HCT116 (cell line): ENCODE measurements at regions of chr4 and their contacts with region 1.

Region 1: DNA sequence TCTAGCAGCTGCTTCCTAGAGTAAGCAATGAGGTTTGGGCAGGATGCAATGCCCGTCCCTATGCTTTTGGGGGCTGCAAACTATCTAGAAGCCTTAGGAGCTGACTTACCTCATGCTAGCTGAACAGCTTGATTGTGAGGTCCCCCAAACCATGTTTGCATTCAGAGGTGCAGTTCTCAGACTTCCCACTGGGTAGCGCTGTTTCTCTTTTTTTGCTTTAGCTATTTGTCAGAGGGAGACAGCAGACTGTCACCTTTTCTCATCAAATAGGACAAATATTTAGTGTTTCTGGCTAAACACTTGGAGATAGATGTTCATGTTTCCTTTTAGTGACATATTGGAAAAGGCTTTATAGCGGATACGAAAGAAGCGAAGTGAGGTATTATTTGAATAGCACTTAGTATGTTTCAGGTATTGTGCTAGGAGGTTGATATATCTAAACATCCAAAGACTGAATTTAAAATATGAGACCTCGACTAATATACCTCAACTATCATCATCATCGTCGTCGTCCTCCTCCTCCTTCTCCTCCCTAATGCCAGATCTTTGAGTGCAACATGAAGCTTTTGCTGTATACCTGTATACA is 18.7 kb upstream of the TMEM192 start:
- DNase-seq: peak; percentile 46
- ATAC-seq: peak; percentile 95
- H3K4me3 ChIP-seq: no peak overlapping the region
- H3K27ac ChIP-seq: no peak overlapping the region
- H3K4me1 ChIP-seq: no peaks in the 10 kb centered on the region
- H3K27me3 ChIP-seq: no peaks in the 10 kb centered on the region
- CTCF ChIP-seq: peak; percentile 82 to 98 (median 88)
- POLR2A ChIP-seq: no peak
- RAD21 ChIP-seq: peak; percentile 95

Region 2: DNA sequence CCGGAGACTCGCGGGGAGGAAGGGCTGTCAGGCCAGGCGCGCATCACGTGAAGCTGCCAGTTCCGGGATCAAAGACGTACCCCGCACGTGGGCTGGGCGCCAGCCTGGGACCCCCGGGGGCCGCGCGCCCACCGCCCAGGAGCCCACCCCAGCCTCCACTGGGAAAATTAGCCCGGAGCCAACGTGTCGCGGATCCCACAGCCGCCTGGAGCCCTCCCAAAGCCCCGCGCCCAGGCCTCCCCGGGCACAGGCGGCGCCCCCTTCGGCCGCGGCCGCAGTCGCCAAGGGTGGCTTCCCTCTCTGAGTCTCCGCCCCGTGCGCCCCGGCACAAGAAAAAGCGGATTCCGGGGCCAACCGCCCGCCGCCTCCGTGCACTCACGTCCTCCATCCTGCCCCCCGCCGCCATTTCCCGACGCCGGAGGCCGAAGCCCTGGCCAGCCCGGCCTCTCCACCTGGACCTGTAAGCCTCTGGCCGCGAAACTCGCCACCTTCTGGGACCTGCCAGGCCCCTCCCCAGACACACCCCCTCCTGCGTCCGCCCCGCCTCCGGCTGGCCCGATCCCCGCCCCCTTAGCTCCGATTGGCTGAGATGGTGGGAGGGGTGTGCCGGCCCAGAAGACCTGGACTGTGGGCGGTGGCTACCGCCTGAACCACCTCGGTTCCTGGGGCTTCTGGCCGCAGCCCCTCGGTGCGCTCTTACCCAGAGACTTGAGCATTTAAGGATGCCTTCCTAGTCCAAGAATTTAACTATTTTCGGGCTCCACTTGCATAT is 18.8 kb before region 1 on chr4 and contains the start of gene TMEM192:
- CTCF ChIA-PET with region 1: interaction called, 15 read pairs
- POLR2A ChIA-PET with region 1: no interaction called
- RAD21 ChIA-PET with region 1: no interaction called
- intact Hi-C with region 1: no loop called
- DNase-seq: peak; percentile 83
- ATAC-seq: peak; percentile 93
- H3K4me3 ChIP-seq: peak within 1 kb of the TSS; percentile 65 to 78
- H3K27ac ChIP-seq: peak within 1 kb of the TSS; percentile 74
- H3K4me1 ChIP-seq: peaks cover 8 to 14% of the 10 kb centered on the region in 2 experiments; a peak in 3 of 4 replicates
- H3K27me3 ChIP-seq: no peaks in the 10 kb centered on the region
- CTCF ChIP-seq: peak in 2 of 3 experiments; percentile 39 to 53; a peak in 4 of 6 replicates
- POLR2A ChIP-seq: no peak
- RAD21 ChIP-seq: no peak
- total RNA-seq, gene TMEM192: 13.1 TPM

Region 3: GRCh38 chr4:165343353-165344191 is 212.2 kb after region 1 on chr4:
- CTCF ChIA-PET with region 1: interaction called, 99 read pairs
- POLR2A ChIA-PET with region 1: no interaction called
- RAD21 ChIA-PET with region 1: interaction called, 4 to 14 read pairs
- intact Hi-C with region 1: loop called (anchors 1 kb)
- DNase-seq: no peak
- ATAC-seq: peak; percentile 78
- H3K4me3 ChIP-seq: no peak overlapping the region
- H3K27ac ChIP-seq: no peak overlapping the region
- H3K4me1 ChIP-seq: no peaks in the 10 kb centered on the region
- H3K27me3 ChIP-seq: no peaks in the 10 kb centered on the region
- CTCF ChIP-seq: peak; percentile 53 to 65 (median 59); a peak in 4 of 6 replicates
- POLR2A ChIP-seq: no peak
- RAD21 ChIP-seq: peak; percentile 86

Region 4: DNA sequence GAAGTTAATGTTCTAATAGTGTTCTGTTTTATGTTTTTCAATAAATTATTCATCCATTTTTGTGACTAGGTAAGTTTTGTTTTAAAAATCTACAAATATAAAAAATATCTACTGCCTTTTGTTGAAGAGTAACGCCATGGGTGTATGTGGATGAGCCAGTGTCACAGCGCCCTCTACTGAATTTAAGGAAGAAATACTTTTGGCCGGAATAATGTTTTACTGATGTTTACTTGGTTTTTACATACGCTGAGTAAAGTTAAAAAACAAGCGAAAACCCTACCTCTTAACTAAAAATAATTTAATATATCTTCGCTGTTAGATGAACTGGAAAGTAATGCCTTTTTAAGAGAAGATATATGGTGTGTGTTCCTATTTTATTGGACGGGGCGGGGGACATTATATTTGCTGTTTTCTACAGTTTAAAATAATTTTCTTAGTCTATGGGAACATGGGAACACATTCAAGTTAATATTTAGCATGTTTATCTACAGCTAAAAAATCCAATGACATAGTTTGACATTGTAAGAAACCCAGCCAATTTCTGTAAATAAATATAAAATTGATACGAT is 333.6 kb after region 1 on chr4:
- CTCF ChIA-PET with region 1: interaction called, 7 read pairs
- POLR2A ChIA-PET with region 1: no interaction called
- RAD21 ChIA-PET with region 1: interaction called in 1 of 2 experiments, 3 read pairs
- intact Hi-C with region 1: loop called (anchors 1 kb)
- DNase-seq: no peak
- ATAC-seq: peak; percentile 88
- H3K4me3 ChIP-seq: no peak overlapping the region
- H3K27ac ChIP-seq: no peak overlapping the region
- H3K4me1 ChIP-seq: no peaks in the 10 kb centered on the region
- H3K27me3 ChIP-seq: no peaks in the 10 kb centered on the region
- CTCF ChIP-seq: peak; percentile 64 to 92 (median 78)
- POLR2A ChIP-seq: no peak
- RAD21 ChIP-seq: peak; percentile 94

Region 5: DNA sequence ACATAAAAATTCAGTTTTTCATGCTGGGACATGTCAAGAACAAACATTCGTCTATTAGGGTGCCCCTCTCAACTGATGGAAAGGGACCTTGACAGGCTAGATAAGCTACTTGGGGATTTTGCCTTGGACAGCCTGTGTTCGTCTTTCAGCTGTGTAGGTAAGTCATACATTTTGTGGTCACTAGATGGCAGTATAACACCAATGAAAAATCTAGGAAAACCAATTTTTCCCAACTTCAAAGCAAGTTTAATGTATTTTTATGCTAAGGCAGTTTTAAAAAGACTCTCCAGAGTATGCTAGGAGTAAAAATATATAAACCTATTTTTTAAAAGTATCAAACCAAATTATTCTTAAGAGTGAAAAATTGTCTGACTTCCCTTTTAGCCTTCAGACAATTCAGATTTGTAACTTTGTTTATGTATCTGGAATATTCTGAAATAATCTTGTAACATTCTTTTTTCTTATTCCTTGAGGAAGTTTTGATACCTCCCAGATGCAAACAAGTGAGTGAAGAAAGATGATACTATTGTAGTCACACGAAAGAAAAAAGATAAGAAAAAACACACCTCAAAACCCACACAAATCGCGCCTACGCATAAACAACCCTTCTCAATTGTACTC is 405.8 kb after region 1 on chr4:
- CTCF ChIA-PET with region 1: interaction called, 3 read pairs
- POLR2A ChIA-PET with region 1: no interaction called
- RAD21 ChIA-PET with region 1: no interaction called
- intact Hi-C with region 1: loop called (anchors 5 kb)
- DNase-seq: peak; percentile 51
- ATAC-seq: peak; percentile 72; the same call in 1 of the 2 replicates
- H3K4me3 ChIP-seq: no peak overlapping the region
- H3K27ac ChIP-seq: no peak overlapping the region
- H3K4me1 ChIP-seq: no peaks in the 10 kb centered on the region
- H3K27me3 ChIP-seq: no peaks in the 10 kb centered on the region
- CTCF ChIP-seq: peak; percentile 44 to 77 (median 63)
- POLR2A ChIP-seq: no peak
- RAD21 ChIP-seq: peak; percentile 86